CD8-positive, alpha-beta T cell (primary cell): ENCODE measurements at regions of chr2 and their contacts with region 1.

Region 1: DNA sequence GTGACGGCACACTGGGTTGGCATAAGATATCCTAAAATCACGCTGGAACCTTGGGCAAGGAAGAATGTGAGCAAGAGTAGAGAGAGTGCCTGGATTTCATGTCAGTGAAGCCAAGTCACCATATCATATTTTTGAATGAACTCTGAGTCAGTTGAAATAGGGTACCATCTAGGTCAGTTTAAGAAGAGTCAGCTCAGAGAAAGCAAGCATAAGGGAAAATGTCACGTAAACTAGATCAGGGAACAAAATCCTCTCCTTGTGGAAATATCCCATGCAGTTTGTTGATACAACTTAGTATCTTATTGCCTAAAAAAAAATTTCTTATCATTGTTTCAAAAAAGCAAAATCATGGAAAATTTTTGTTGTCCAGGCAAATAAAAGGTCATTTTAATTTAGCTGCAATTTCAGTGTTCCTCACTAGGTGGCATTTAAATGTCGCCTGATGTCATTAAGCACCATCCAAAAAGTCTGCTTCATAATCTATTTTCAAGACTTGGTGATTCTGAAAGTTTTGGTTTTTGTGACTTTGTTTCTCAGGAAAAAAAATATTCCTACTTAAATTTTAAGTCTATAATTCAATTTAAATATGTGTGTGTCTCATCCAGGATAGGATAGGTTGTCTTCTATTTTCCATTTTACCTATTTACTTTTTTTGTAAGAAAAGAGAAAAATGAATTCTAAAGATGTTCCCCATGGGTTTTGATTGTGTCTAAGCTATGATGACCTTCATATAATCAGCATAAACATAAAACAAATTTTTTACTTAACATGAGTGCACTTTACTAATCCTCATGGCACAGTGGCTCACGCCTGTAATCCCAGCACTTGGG is 19.6 kb downstream of the RSAD2 start:
- DNase-seq: peak in 2 of 9 experiments; percentile 61 to 70
- ATAC-seq: peak; percentile 58
- H3K4me3 ChIP-seq: no peak overlapping the region
- H3K4me3 Mint-ChIP-seq: no peak overlapping the region
- H3K27ac ChIP-seq: no peak overlapping the region
- H3K27ac Mint-ChIP-seq: no peak overlapping the region
- H3K4me1 ChIP-seq: peaks cover 7% of the 10 kb centered on the region
- H3K4me1 Mint-ChIP-seq: peaks cover 5% of the 10 kb centered on the region
- H3K27me3 ChIP-seq: no peaks in the 10 kb centered on the region
- H3K27me3 Mint-ChIP-seq: no peaks in the 10 kb centered on the region
- CTCF ChIP-seq: peak; percentile 95

Region 2: DNA sequence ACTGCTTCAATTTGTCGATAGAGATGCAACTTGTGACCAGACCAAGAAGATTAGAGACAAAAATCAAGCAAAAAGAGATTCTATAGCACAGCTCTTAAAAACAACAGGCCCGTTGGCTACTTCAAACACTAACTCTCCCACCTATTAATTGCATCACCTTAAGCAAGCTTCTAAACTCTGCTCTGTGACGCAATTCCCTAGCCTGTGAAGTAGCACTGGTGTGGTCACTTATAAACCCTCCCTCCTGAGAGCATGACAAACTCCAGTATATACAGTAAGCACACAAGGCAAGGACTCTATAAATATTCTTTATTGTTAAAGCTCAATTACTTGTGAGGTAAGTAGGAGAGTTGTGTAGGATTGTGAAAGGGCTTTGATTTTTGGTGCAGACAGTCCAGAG is 103.8 kb before region 1 on chr2:
- CTCF ChIA-PET with region 1: no interaction called
- POLR2A ChIA-PET with region 1: no interaction called
- intact Hi-C with region 1: no loop called
- DNase-seq: no peak
- ATAC-seq: no peak
- H3K4me3 ChIP-seq: no peak overlapping the region
- H3K4me3 Mint-ChIP-seq: no peak overlapping the region
- H3K27ac ChIP-seq: no peak overlapping the region
- H3K27ac Mint-ChIP-seq: no peak overlapping the region
- H3K4me1 ChIP-seq: no peaks in the 10 kb centered on the region
- H3K4me1 Mint-ChIP-seq: no peaks in the 10 kb centered on the region
- H3K27me3 ChIP-seq: no peaks in the 10 kb centered on the region
- H3K27me3 Mint-ChIP-seq: peaks cover 8% of the 10 kb centered on the region
- CTCF ChIP-seq: no peak

Region 3: DNA sequence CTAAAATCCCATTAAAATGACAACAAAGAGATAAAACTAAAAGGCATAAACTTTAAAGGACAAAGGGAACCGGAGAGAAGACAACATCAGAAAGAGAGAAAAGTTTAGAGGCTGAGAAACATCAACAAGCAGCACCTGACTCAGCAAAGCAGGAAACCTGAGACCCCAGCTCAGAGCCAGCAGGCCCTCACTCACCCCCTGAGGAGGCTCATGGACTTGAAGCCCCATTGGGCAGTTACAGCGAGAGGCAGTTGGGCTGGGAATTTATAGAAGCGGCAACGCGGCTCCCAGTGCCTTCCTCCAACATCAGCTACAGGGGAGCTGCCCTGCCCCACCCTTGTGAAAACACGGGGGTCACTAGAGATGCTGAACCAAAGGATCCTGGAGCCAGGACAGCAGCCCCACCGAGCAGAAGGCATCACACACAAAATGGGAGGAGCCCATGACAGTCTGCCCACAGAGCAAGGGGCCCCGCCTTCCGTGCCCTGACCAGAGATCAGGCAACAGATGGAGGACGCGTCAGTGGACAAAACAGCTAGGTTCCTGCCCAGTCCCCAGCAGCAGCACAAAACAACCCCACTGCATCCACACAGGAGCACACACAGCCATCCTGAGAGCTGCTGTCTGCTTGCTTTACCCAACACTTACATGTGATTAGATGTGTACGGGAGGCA is 84.2 kb before region 1 on chr2:
- CTCF ChIA-PET with region 1: no interaction called
- POLR2A ChIA-PET with region 1: no interaction called
- intact Hi-C with region 1: no loop called
- DNase-seq: no peak
- ATAC-seq: no peak
- H3K4me3 ChIP-seq: no peak overlapping the region
- H3K4me3 Mint-ChIP-seq: no peak overlapping the region
- H3K27ac ChIP-seq: no peak overlapping the region
- H3K27ac Mint-ChIP-seq: no peak overlapping the region
- H3K4me1 ChIP-seq: no peaks in the 10 kb centered on the region
- H3K4me1 Mint-ChIP-seq: no peaks in the 10 kb centered on the region
- H3K27me3 ChIP-seq: peaks cover 0 to 4% of the 10 kb centered on the region in 2 experiments
- H3K27me3 Mint-ChIP-seq: peaks cover 24% of the 10 kb centered on the region
- CTCF ChIP-seq: no peak

Region 4: GRCh38 chr2:6826081-6826913 is 70.8 kb before region 1 on chr2:
- CTCF ChIA-PET with region 1: interaction called, 4 read pairs
- POLR2A ChIA-PET with region 1: no interaction called
- intact Hi-C with region 1: loop called in 1 of 2 experiments (anchors 1 kb)
- DNase-seq: peak; percentile 12 to 73 (median 51)
- ATAC-seq: peak; percentile 80
- H3K4me3 ChIP-seq: no peak overlapping the region
- H3K4me3 Mint-ChIP-seq: no peak overlapping the region
- H3K27ac ChIP-seq: no peak overlapping the region
- H3K27ac Mint-ChIP-seq: no peak overlapping the region
- H3K4me1 ChIP-seq: no peaks in the 10 kb centered on the region
- H3K4me1 Mint-ChIP-seq: peaks cover 7% of the 10 kb centered on the region
- H3K27me3 ChIP-seq: no peaks in the 10 kb centered on the region
- H3K27me3 Mint-ChIP-seq: peaks cover 2% of the 10 kb centered on the region
- CTCF ChIP-seq: peak; percentile 89

Region 5: DNA sequence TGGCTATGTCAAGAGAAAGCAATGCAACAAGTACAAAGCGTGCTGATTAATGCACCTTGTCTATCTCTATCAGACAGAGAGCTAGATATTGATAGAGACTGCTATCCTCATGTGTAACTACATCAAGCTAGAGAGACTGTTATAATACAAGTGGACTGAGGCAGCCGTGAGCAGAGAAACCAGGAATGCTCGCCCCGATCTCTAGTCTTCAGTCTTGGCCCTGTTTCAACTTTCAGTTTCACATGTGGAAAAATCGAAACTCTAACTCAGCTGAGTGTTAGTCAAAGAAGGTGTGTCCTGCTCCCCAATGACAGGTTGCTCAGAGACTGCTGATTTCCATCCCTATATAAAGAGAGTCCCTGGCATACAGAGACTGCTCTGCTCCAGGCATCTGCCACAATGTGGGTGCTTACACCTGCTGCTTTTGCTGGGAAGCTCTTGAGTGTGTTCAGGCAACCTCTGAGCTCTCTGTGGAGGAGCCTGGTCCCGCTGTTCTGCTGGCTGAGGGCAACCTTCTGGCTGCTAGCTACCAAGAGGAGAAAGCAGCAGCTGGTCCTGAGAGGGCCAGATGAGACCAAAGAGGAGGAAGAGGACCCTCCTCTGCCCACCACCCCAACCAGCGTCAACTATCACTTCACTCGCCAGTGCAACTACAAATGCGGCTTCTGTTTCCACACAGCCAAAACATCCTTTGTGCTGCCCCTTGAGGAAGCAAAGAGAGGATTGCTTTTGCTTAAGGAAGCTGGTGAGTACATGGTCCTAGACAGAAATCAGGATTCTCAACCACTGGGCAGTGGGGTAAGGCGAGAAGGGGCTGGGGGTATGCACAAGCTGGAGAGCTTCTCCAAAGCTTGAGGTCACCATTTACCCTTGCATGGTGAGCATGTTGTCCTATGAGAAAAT is 19.5 kb before region 1 on chr2 and contains the start of gene RSAD2:
- CTCF ChIA-PET with region 1: interaction called, 16 read pairs
- POLR2A ChIA-PET with region 1: no interaction called
- intact Hi-C with region 1: no loop called
- DNase-seq: peak in 7 of 9 experiments; percentile 16 to 81 (median 47)
- ATAC-seq: peak; percentile 84
- H3K4me3 ChIP-seq: peak within 1 kb of the TSS; percentile 56 to 63
- H3K4me3 Mint-ChIP-seq: peak within 1 kb of the TSS; percentile 88
- H3K27ac ChIP-seq: peak within 1 kb of the TSS; percentile 34 to 47
- H3K27ac Mint-ChIP-seq: peak within 1 kb of the TSS; percentile 87
- H3K4me1 ChIP-seq: peaks cover 59% of the 10 kb centered on the region
- H3K4me1 Mint-ChIP-seq: peaks cover 66% of the 10 kb centered on the region
- H3K27me3 ChIP-seq: no peaks in the 10 kb centered on the region
- H3K27me3 Mint-ChIP-seq: no peaks in the 10 kb centered on the region
- CTCF ChIP-seq: no peak
- total RNA-seq, gene RSAD2: 1.8 to 2.1 TPM

Region 6: GRCh38 chr2:6917071-6917760 is 20.1 kb after region 1 on chr2 and contains the start of gene RNF144A:
- CTCF ChIA-PET with region 1: interaction called, 109 read pairs
- POLR2A ChIA-PET with region 1: interaction called, 3 read pairs
- intact Hi-C with region 1: loop called (anchors 1 to 2 kb)
- DNase-seq: peak; percentile 52 to 89 (median 74)
- ATAC-seq: peak; percentile 77
- H3K4me3 ChIP-seq: peak within 1 kb of the TSS; percentile 57 to 65
- H3K4me3 Mint-ChIP-seq: peak within 1 kb of the TSS; percentile 80
- H3K27ac ChIP-seq: peak within 1 kb of the TSS in 1 of 2 experiments; percentile 28
- H3K27ac Mint-ChIP-seq: no peak within 1 kb of the TSS
- H3K4me1 ChIP-seq: peaks cover 79% of the 10 kb centered on the region
- H3K4me1 Mint-ChIP-seq: peaks cover 75% of the 10 kb centered on the region
- H3K27me3 ChIP-seq: no peaks in the 10 kb centered on the region
- H3K27me3 Mint-ChIP-seq: no peaks in the 10 kb centered on the region
- CTCF ChIP-seq: peak; percentile 63
- total RNA-seq, gene RNF144A: 25.8 to 28.8 TPM

Region 7: DNA sequence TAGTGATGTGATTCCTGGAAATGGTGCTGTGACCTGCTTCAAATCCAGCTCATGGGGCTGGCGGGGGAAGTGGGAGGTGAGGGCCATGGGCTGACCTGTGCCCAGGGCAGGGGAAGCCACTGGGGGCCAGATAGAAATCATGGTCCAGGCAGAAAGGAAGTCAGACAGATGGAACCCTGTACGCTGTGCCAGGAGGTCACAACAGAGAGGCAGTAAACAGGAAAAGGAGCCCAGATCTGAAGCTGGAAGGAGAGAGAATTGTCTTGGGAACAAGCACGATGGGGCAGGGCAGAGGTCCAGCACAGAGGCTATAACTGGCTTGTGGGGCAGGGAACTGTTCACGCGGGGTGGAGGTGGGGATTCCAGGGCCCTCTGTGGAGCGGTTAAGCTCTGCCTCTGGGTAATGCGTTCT is 96.1 kb after region 1 on chr2:
- CTCF ChIA-PET with region 1: interaction called, 16 read pairs
- POLR2A ChIA-PET with region 1: no interaction called
- intact Hi-C with region 1: no loop called
- DNase-seq: no peak
- ATAC-seq: no peak
- H3K4me3 ChIP-seq: no peak overlapping the region
- H3K4me3 Mint-ChIP-seq: no peak overlapping the region
- H3K27ac ChIP-seq: no peak overlapping the region
- H3K27ac Mint-ChIP-seq: peak overlapping the region; percentile 60
- H3K4me1 ChIP-seq: no peaks in the 10 kb centered on the region
- H3K4me1 Mint-ChIP-seq: peaks cover 13% of the 10 kb centered on the region
- H3K27me3 ChIP-seq: no peaks in the 10 kb centered on the region
- H3K27me3 Mint-ChIP-seq: no peaks in the 10 kb centered on the region
- CTCF ChIP-seq: no peak